ENCODE measurements at regions of chr5 and their contacts with region 1.

Region 1: GRCh38 chr5:65809817-65810531 is 88.0 kb downstream of the NLN start:
- DNase-seq: no peak
- H3K4me3 ChIP-seq: no peak overlapping the region
- H3K4me3 Mint-ChIP-seq: no peak overlapping the region
- H3K27ac Mint-ChIP-seq: no peak overlapping the region
- H3K4me1 ChIP-seq: peaks cover 15% of the 10 kb centered on the region
- H3K4me1 Mint-ChIP-seq: no peaks in the 10 kb centered on the region
- H3K27me3 ChIP-seq: no peaks in the 10 kb centered on the region
- H3K27me3 Mint-ChIP-seq: no peaks in the 10 kb centered on the region
- CTCF ChIP-seq: no peak

Region 2: DNA sequence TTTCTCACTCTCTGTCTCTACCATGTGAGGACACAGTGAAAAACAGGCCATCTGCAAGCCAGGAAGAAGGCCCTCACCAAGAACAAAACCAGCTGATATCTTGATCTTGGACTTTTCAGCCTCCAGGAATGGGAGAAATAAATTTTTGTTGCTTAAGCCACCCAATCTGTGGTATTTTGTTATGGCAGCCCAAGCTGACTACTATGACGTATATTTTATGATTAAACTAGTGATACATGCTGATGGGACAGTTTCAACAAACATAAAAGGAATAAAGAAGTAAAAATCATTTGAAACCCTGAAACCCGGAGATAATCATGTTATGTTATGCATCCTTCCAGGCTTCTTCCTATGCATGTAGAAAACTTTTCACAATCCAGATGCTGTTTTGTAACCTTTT is 45.0 kb after region 1 on chr5:
- CTCF ChIA-PET with region 1: no interaction called
- POLR2A ChIA-PET with region 1: no interaction called
- intact Hi-C with region 1: loop called (anchors 5 kb)
- DNase-seq: no peak
- H3K4me3 ChIP-seq: no peak overlapping the region
- H3K4me3 Mint-ChIP-seq: no peak overlapping the region
- H3K27ac Mint-ChIP-seq: no peak overlapping the region
- H3K4me1 ChIP-seq: no peaks in the 10 kb centered on the region
- H3K4me1 Mint-ChIP-seq: peaks cover 4% of the 10 kb centered on the region
- H3K27me3 ChIP-seq: no peaks in the 10 kb centered on the region
- H3K27me3 Mint-ChIP-seq: no peaks in the 10 kb centered on the region
- CTCF ChIP-seq: no peak

Region 3: GRCh38 chr5:65880496-65881072 is 70.6 kb after region 1 on chr5:
- CTCF ChIA-PET with region 1: no interaction called
- POLR2A ChIA-PET with region 1: no interaction called
- intact Hi-C with region 1: no loop called
- DNase-seq: no peak
- H3K4me3 ChIP-seq: no peak overlapping the region
- H3K4me3 Mint-ChIP-seq: no peak overlapping the region
- H3K27ac Mint-ChIP-seq: no peak overlapping the region
- H3K4me1 ChIP-seq: no peaks in the 10 kb centered on the region
- H3K4me1 Mint-ChIP-seq: no peaks in the 10 kb centered on the region
- H3K27me3 ChIP-seq: no peaks in the 10 kb centered on the region
- H3K27me3 Mint-ChIP-seq: no peaks in the 10 kb centered on the region
- CTCF ChIP-seq: no peak

Region 4: DNA sequence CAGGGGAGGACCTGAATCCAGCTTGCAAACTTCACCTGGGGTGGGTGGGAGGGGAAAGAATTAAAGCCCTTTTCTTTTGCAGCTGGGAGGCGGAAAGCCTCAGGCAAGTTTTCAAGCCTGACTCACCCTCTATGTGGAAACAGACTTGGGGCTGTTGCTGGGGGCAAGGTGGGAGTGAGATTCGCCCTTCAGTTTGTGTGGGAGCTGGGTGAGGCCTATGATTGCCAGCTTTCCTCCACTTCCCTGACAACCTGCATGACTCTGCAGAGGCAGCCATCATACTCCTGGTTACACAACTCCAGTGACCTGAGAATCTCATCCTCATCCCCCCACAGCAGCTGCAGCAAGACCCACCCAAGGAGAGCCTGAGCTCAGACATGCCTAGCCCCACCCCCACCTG is 290.9 kb after region 1 on chr5:
- CTCF ChIA-PET with region 1: no interaction called
- POLR2A ChIA-PET with region 1: no interaction called
- intact Hi-C with region 1: no loop called
- DNase-seq: no peak
- H3K4me3 ChIP-seq: no peak overlapping the region
- H3K4me3 Mint-ChIP-seq: no peak overlapping the region
- H3K27ac Mint-ChIP-seq: no peak overlapping the region
- H3K4me1 ChIP-seq: no peaks in the 10 kb centered on the region
- H3K4me1 Mint-ChIP-seq: no peaks in the 10 kb centered on the region
- H3K27me3 ChIP-seq: no peaks in the 10 kb centered on the region
- H3K27me3 Mint-ChIP-seq: no peaks in the 10 kb centered on the region
- CTCF ChIP-seq: no peak